ENCODE measurements at regions of chr6 and their contacts with region 1.

Region 1: GRCh38 chr6:150417899-150418826 is 49.4 kb downstream of the IYD start:
- DNase-seq: peak in 4 of 5 donors; percentile 6 to 51 (median 32)
- H3K4me3 ChIP-seq: peak overlapping the region; percentile 53
- H3K4me3 Mint-ChIP-seq: peak overlapping the region; percentile 72 to 92 (median 77)
- H3K27ac ChIP-seq: no peak overlapping the region
- H3K27ac Mint-ChIP-seq: peak overlapping the region; percentile 6 to 96 (median 39)
- H3K4me1 ChIP-seq: peaks cover 3% of the 10 kb centered on the region
- H3K4me1 Mint-ChIP-seq: peaks cover 9 to 26% (median 20%) of the 10 kb centered on the region in 3 donors
- H3K27me3 ChIP-seq: no peaks in the 10 kb centered on the region
- H3K27me3 Mint-ChIP-seq: peaks cover 8 to 31% of the 10 kb centered on the region in 2 donors

Region 2: DNA sequence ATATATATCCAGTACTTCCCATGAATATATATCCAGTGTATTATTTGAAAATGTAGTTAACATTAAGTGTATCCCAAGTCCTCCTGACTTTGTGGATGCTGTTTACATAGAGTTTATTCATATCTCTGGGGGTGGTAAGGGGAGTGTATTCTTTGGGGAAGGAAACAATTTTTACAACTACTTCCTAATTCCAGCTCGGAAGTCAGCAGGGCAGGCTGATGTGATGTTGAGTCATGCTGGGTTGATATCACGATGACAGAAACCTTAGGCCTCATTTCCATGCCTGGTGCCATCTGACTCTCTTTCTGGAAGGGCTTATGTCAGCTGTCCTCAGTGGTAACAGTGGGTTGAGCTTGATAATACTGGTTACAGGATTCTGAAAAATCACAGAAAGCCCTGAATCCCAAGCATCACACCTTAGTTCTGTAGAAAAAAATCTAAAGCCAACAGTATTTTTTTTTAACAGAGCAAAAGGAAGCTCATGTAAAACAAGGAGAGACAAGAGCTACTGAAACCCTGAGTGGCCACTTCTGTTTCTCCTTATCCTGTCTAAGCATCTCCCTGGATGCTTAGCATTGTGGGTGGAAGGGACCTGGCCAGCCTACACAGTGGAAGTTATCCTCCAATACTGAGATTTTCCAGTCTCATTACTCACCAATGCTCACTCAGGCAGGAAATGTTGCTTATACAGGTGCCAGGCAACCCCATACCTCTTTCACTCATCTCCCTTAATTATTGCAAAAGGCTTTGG is 124.6 kb before region 1 on chr6:
- CTCF ChIA-PET with region 1: no interaction called
- POLR2A ChIA-PET with region 1: no interaction called
- DNase-seq: no peak
- H3K4me3 ChIP-seq: no peak overlapping the region
- H3K4me3 Mint-ChIP-seq: no peak overlapping the region
- H3K27ac ChIP-seq: peak overlapping the region; percentile 27
- H3K27ac Mint-ChIP-seq: no peak overlapping the region
- H3K4me1 ChIP-seq: no peaks in the 10 kb centered on the region
- H3K4me1 Mint-ChIP-seq: no peaks in the 10 kb centered on the region
- H3K27me3 ChIP-seq: no peaks in the 10 kb centered on the region
- H3K27me3 Mint-ChIP-seq: peaks cover 6 to 14% of the 10 kb centered on the region in 2 donors

Region 3: DNA sequence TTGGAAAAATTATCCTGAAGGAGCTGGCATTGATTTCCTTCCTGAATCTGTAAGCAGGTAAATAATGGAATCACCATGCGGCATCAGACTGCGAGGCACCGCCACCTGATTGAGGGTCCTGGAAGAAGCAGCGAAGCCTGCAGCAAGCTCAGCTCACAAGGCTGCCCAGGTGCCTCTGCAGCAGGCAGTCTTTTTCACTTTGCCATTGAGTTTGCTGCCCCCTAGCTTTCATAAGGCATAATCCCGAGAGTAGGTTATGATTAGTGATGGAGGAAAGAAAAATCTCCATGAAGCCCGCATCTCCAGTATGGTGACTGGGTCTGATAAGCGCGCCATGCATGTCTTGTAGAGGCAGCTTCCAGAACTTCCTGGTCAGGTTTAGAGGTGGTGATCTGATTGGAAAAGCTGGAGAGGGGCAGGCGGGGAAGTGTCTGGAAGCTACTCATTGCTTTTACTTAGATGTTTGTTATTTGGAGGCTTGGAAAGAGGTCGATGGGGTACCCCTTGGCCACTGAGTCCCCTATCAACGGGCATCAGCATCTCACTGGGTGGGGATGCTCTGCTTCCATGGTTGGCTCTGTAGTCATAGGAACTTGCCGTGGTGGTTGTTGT is 22.7 kb before region 1 on chr6:
- CTCF ChIA-PET with region 1: interaction called, 12 read pairs
- POLR2A ChIA-PET with region 1: no interaction called
- DNase-seq: peak; percentile 4 to 58 (median 13)
- H3K4me3 ChIP-seq: no peak overlapping the region
- H3K4me3 Mint-ChIP-seq: no peak overlapping the region
- H3K27ac ChIP-seq: no peak overlapping the region
- H3K27ac Mint-ChIP-seq: no peak overlapping the region
- H3K4me1 ChIP-seq: no peaks in the 10 kb centered on the region
- H3K4me1 Mint-ChIP-seq: no peaks in the 10 kb centered on the region
- H3K27me3 ChIP-seq: no peaks in the 10 kb centered on the region
- H3K27me3 Mint-ChIP-seq: peaks cover 10 to 33% of the 10 kb centered on the region in 2 donors

Region 4: GRCh38 chr6:150600301-150601017 is 182.3 kb after region 1 on chr6:
- CTCF ChIA-PET with region 1: interaction called, 10 read pairs
- POLR2A ChIA-PET with region 1: interaction called, 5 read pairs
- DNase-seq: peak; percentile 30 to 84 (median 57)
- H3K4me3 ChIP-seq: peak overlapping the region; percentile 52
- H3K4me3 Mint-ChIP-seq: peak overlapping the region; percentile 91 to 97 (median 94)
- H3K27ac ChIP-seq: no peak overlapping the region
- H3K27ac Mint-ChIP-seq: peak overlapping the region; percentile 81 to 97 (median 92)
- H3K4me1 ChIP-seq: no peaks in the 10 kb centered on the region
- H3K4me1 Mint-ChIP-seq: peaks cover 17 to 24% (median 21%) of the 10 kb centered on the region in 3 donors
- H3K27me3 ChIP-seq: no peaks in the 10 kb centered on the region
- H3K27me3 Mint-ChIP-seq: peaks cover 4 to 7% of the 10 kb centered on the region in 2 donors